ENCODE measurements at regions of chr1 and their contacts with region 1.

Region 1: DNA sequence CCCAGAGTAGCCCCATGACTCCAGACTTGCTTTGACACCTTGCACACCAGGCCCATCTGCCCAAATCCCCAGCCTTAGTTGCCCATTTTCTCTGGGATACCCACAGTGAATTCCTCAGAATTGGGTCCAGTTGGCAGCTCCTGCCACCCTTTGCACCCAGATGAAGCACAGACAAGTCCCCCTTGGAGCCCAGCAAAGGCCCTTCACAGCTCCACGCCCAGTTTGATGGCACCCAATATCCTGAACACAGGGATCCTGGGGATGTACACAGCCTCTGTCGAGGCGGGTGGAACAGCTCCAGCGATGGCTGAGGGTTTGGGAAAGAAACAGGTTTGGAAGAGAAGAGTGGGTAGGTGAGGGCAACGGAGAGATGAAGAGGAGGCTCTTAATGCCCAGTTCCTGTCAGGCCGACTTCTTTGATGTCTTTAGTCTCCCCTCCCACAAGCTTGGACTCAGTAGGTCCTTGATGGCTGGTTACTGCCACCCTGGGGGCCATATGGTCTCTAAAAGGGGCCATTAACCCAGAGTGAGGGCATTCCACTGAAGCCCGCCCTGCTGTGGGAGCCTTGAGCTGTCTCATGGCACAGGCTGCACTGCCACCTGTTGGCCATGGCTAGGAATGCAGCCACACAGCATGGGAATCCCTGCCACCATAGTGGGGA is 21.7 kb downstream of the TMEM53 start:
- DNase-seq: peak; percentile 70
- H3K4me3 ChIP-seq: no peak overlapping the region
- H3K27ac ChIP-seq: no peak overlapping the region
- H3K4me1 ChIP-seq: no peaks in the 10 kb centered on the region
- H3K27me3 ChIP-seq: no peaks in the 10 kb centered on the region

Region 2: GRCh38 chr1:44609412-44609767 is 43.2 kb before region 1 on chr1:
- in situ Hi-C with region 1: loop called (anchors 5 kb)
- DNase-seq: peak; percentile 70
- H3K4me3 ChIP-seq: no peak overlapping the region
- H3K27ac ChIP-seq: no peak overlapping the region
- H3K4me1 ChIP-seq: peaks cover 9% of the 10 kb centered on the region
- H3K27me3 ChIP-seq: no peaks in the 10 kb centered on the region